ENCODE measurements at regions of chr1 and their contacts with region 1.

Region 1: DNA sequence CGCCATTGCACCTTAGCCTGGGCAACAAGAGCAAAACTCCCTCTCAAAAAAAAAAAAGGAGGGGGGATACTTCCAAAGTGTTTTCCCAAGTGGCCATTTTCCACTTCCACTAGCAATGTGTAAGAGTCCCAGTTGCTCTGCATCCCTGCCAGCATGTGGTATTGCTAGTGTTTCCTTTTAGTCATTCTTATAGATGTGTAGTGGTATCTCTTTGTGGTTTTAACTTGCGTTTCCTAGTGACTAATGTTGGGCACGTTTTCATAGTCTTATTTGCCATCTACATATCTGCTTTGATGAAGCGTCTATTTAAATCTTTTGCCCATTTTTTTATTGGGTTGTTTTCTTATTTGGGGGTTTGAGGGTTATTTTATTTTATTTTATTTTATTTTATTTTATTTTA is 31.1 kb downstream of the INAVA start:
- DNase-seq: no peak
- H3K4me3 ChIP-seq: no peak overlapping the region
- H3K27ac ChIP-seq: no peak overlapping the region
- H3K4me1 ChIP-seq: no peaks in the 10 kb centered on the region
- H3K27me3 ChIP-seq: no peaks in the 10 kb centered on the region
- CTCF ChIP-seq: no peak

Region 2: DNA sequence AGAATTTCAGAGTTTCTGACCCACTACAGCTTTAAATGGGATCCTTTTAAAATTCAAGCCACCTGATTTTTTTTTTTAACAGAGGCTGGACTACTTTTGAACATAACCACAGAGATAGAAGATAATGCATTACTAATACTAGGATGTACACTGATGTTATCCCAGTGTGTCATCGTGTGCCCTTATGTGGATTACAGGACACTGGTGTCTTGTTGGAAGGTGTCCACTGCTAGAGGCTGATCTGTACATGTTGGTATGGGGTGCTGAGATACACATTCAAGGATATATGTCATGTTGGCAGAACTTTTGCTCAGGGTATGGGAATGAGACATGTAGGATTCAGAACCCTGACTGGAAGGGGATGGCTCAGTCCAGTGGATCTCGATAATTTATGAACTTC is 25.2 kb after region 1 on chr1:
- CTCF ChIA-PET with region 1: interaction called, 13 read pairs
- POLR2A ChIA-PET with region 1: no interaction called
- intact Hi-C with region 1: no loop called
- DNase-seq: no peak
- H3K4me3 ChIP-seq: no peak overlapping the region
- H3K27ac ChIP-seq: no peak overlapping the region
- H3K4me1 ChIP-seq: no peaks in the 10 kb centered on the region
- H3K27me3 ChIP-seq: no peaks in the 10 kb centered on the region
- CTCF ChIP-seq: no peak

Region 3: DNA sequence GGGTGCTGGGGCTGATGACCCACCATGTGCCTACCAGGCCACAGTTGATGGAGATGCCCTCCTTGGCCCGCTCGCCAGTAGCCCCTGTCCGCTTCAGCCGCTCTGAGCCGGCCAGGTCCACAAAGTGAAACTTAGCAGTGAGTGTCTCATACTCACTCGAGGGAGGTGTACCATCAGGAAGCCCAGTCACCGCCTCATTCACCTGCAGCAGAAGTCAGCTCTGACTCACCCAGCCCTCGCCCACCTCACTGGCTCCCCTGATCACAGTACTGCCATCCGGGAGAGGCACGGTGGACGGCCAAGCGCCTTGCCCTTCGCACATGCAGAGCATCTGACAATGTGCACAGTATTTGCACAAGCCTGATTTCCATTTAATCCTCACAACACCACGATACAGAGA is 78.9 kb after region 1 on chr1:
- CTCF ChIA-PET with region 1: no interaction called
- POLR2A ChIA-PET with region 1: no interaction called
- intact Hi-C with region 1: no loop called
- DNase-seq: no peak
- H3K4me3 ChIP-seq: no peak overlapping the region
- H3K27ac ChIP-seq: no peak overlapping the region
- H3K4me1 ChIP-seq: no peaks in the 10 kb centered on the region
- H3K27me3 ChIP-seq: no peaks in the 10 kb centered on the region
- CTCF ChIP-seq: no peak

Measured in A673 (cell line).